CD4-positive, alpha-beta memory T cell (primary cell): ENCODE measurements at regions of chr6 and their contacts with region 1.

Region 1: GRCh38 chr6:41683510-41684310 is 45.4 kb downstream of the MDFI start:
- DNase-seq: peak; percentile 65 to 73 (median 69)
- H3K4me3 ChIP-seq: peak overlapping the region in 1 of 2 donors; percentile 43
- H3K4me3 Mint-ChIP-seq: peak overlapping the region; percentile 42 to 86 (median 66)
- H3K27ac ChIP-seq: peak overlapping the region; percentile 21
- H3K27ac Mint-ChIP-seq: peak overlapping the region in 2 of 7 donors; percentile 22 to 47
- H3K4me1 ChIP-seq: peaks cover 3% of the 10 kb centered on the region
- H3K4me1 Mint-ChIP-seq: peaks cover 4 to 21% (median 10%) of the 10 kb centered on the region in 4 donors
- H3K27me3 ChIP-seq: no peaks in the 10 kb centered on the region
- H3K27me3 Mint-ChIP-seq: peaks cover 0 to under 1% of the 10 kb centered on the region in 2 donors

Region 2: GRCh38 chr6:41367700-41368099 is 316.0 kb before region 1 on chr6:
- CTCF ChIA-PET with region 1: interaction called, 20 read pairs
- POLR2A ChIA-PET with region 1: no interaction called
- intact Hi-C with region 1: loop called (anchors 1 kb)
- DNase-seq: no peak
- H3K4me3 ChIP-seq: no peak overlapping the region
- H3K4me3 Mint-ChIP-seq: no peak overlapping the region
- H3K27ac ChIP-seq: no peak overlapping the region
- H3K27ac Mint-ChIP-seq: peak overlapping the region in 1 of 7 donors; percentile 8
- H3K4me1 ChIP-seq: peaks cover 19% of the 10 kb centered on the region
- H3K4me1 Mint-ChIP-seq: peaks cover 17 to 27% (median 21%) of the 10 kb centered on the region in 4 donors
- H3K27me3 ChIP-seq: peaks cover 29% of the 10 kb centered on the region
- H3K27me3 Mint-ChIP-seq: peaks cover 38 to 42% of the 10 kb centered on the region in 2 donors

Region 3: DNA sequence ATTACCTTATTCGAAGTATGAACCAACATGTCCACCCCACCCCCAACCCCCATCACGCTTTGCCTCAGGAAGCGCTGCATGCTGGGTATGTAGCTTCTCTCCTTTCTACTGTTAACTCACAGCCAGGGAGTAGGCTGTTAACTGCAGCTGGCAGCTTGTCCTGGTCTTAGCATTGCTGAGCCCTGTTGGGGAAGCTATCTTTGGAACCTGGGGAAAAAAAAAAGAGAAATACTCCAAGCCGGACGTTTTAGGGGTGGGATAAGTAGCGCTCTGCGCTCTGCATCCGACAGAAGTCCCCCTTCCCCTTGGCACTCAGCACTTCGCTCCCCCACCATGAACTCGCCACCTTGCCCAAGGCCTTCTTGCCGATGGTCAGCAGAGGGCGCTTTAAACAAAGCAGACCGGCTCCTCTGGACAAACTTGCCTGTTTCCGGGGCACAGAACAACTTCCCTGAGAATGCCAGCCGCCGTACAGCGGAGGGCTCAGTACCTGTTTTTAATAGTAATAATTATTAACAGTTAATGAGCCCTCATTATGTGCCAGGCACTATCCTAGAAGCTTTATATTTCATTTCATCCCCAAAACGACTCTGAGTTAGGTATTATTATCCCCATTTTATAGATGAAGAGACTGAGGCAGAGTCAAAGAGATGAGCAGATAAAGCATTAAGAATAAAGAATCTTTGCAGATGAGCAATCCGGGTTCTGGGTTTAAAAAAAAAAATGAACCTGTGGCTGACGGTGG is 80.7 kb before region 1 on chr6:
- CTCF ChIA-PET with region 1: interaction called, 45 read pairs
- POLR2A ChIA-PET with region 1: interaction called, 3 read pairs
- intact Hi-C with region 1: loop called (anchors 1 kb)
- DNase-seq: peak; percentile 67 to 71 (median 70)
- H3K4me3 ChIP-seq: no peak overlapping the region
- H3K4me3 Mint-ChIP-seq: peak overlapping the region in 3 of 8 donors; percentile 3 to 26 (median 18)
- H3K27ac ChIP-seq: no peak overlapping the region
- H3K27ac Mint-ChIP-seq: peak overlapping the region in 2 of 7 donors; percentile 38 to 41
- H3K4me1 ChIP-seq: peaks cover 11% of the 10 kb centered on the region
- H3K4me1 Mint-ChIP-seq: peaks cover 0 to 7% (median 5%) of the 10 kb centered on the region in 4 donors
- H3K27me3 ChIP-seq: peaks cover 3% of the 10 kb centered on the region
- H3K27me3 Mint-ChIP-seq: peaks cover 4 to 7% of the 10 kb centered on the region in 2 donors

Region 4: DNA sequence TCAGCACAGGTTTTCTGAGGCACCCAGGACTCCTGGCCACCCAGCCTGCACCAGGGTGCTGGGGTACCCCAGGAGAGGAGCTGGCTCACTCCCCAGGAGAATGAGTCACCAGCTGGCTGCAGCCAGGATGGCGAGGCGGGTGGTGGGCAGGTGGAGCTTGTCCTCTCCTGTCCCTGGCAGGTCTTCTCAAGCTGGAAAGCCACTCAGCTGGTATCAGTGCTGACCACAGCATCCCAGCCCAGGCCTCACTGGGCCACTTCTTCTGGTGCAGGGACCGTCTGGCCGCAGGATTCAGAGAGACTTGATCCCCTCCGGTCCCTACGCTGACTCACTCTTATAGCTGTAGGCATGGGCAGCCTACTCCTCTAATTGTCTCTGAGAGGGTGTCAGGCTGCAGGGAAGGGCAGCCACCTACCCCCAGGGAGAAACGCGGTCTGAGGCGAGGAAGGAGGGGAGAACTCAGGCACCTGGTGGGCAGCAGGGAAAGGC is 29.5 kb after region 1 on chr6:
- CTCF ChIA-PET with region 1: interaction called, 10 read pairs
- POLR2A ChIA-PET with region 1: no interaction called
- intact Hi-C with region 1: no loop called
- DNase-seq: no peak
- H3K4me3 ChIP-seq: no peak overlapping the region
- H3K4me3 Mint-ChIP-seq: no peak overlapping the region
- H3K27ac ChIP-seq: no peak overlapping the region
- H3K27ac Mint-ChIP-seq: no peak overlapping the region
- H3K4me1 ChIP-seq: peaks cover 12% of the 10 kb centered on the region
- H3K4me1 Mint-ChIP-seq: peaks cover 15 to 49% (median 26%) of the 10 kb centered on the region in 4 donors
- H3K27me3 ChIP-seq: no peaks in the 10 kb centered on the region
- H3K27me3 Mint-ChIP-seq: no peaks in the 10 kb centered on the region